CD14-positive monocyte (primary cell): ENCODE measurements at regions of chr6 and their contacts with region 1.

Region 1: GRCh38 chr6:11381801-11382513 is 149.5 kb upstream of the NEDD9 start:
- DNase-seq: peak; percentile 88 to 94 (median 92)
- H3K4me3 ChIP-seq: peak overlapping the region; percentile 46 to 99 (median 88)
- H3K4me3 Mint-ChIP-seq: peak overlapping the region; percentile 85 to 91
- H3K27ac ChIP-seq: peak overlapping the region; percentile 90 to 97
- H3K27ac Mint-ChIP-seq: peak overlapping the region; percentile 97 to 99 (median 97)
- H3K4me1 ChIP-seq: peaks cover 59 to 68% of the 10 kb centered on the region in 2 donors
- H3K4me1 Mint-ChIP-seq: peaks cover 62% of the 10 kb centered on the region
- H3K27me3 ChIP-seq: no peaks in the 10 kb centered on the region
- H3K27me3 Mint-ChIP-seq: peaks cover 1 to 3% (median 2%) of the 10 kb centered on the region in 3 donors
- CTCF ChIP-seq: no peak

Region 2: DNA sequence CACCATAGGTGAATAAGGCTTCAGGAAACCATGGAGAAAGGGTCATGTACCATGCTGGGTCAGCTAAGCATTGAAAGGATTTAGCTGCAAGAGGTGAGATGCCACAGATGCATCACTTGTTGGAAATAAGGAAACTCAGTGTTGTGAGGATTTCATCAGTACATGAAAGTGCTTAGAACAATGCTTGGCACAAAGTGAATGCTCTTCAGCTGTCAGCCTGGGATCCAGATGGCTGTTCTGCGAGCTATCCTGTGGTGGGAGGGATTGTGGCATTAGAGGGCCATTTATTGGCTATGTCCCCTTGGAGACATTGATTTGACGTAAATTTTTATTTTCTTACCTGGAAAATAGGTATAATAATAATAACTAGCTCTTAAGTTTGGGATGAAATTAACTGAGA is 390.8 kb before region 1 on chr6:
- intact Hi-C with region 1: no loop called
- DNase-seq: no peak
- H3K4me3 ChIP-seq: no peak overlapping the region
- H3K4me3 Mint-ChIP-seq: no peak overlapping the region
- H3K27ac ChIP-seq: no peak overlapping the region
- H3K27ac Mint-ChIP-seq: no peak overlapping the region
- H3K4me1 ChIP-seq: no peaks in the 10 kb centered on the region
- H3K4me1 Mint-ChIP-seq: no peaks in the 10 kb centered on the region
- H3K27me3 ChIP-seq: peaks cover 0 to 3% of the 10 kb centered on the region in 2 donors
- H3K27me3 Mint-ChIP-seq: peaks cover 2 to 7% (median 3%) of the 10 kb centered on the region in 3 donors
- CTCF ChIP-seq: no peak

Region 3: GRCh38 chr6:11343963-11344747 is 37.8 kb before region 1 on chr6:
- intact Hi-C with region 1: loop called in 1 of 2 experiments (anchors 5 kb)
- DNase-seq: no peak
- H3K4me3 ChIP-seq: no peak overlapping the region
- H3K4me3 Mint-ChIP-seq: no peak overlapping the region
- H3K27ac ChIP-seq: no peak overlapping the region
- H3K27ac Mint-ChIP-seq: peak overlapping the region in 3 of 7 donors; percentile 8 to 94 (median 10)
- H3K4me1 ChIP-seq: peaks cover 15 to 32% of the 10 kb centered on the region in 2 donors
- H3K4me1 Mint-ChIP-seq: peaks cover 60% of the 10 kb centered on the region
- H3K27me3 ChIP-seq: no peaks in the 10 kb centered on the region
- H3K27me3 Mint-ChIP-seq: peaks cover 0 to 1% (median 0%) of the 10 kb centered on the region in 3 donors
- CTCF ChIP-seq: no peak

Region 4: DNA sequence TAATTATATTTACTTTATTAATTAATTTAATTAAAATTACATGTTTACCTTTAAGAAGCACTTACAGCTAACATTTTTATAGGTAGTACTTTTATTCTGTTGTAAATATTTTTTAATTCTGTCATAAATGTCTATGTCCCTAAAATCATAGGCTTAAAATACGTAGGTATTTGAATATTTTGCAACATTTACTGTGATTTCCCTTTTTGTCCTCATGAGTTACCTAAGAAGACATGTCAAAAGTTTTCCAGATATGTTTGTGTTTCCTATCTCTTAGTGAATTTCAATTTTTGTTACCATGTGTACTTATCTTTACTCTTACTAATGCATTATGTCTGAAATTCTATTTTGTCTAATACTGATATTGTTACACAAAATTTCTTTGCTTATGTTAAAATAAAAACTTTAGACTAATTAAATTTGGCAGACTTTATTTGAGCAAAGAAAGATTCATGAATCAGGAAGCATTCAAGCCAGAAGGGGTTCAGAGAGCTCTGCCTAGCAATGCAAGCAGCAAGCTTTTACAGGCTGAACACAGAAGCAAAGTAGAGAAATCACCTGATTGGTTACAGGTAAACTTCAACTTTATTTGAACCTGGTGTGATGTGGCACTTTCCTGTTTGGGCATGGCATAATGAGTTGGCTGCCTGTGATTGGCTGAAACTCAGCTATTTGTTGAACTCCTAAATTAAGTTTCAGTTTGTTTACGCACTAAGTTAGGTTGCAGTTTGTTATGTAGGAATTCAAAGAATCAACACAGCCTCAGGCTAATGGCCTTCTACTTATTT is 32.4 kb after region 1 on chr6:
- intact Hi-C with region 1: no loop called
- DNase-seq: peak; percentile 23 to 71 (median 68)
- H3K4me3 ChIP-seq: no peak overlapping the region
- H3K4me3 Mint-ChIP-seq: no peak overlapping the region
- H3K27ac ChIP-seq: peak overlapping the region in 1 of 2 donors; percentile 55
- H3K27ac Mint-ChIP-seq: peak overlapping the region; percentile 66 to 86 (median 81)
- H3K4me1 ChIP-seq: peaks cover 14 to 21% of the 10 kb centered on the region in 2 donors
- H3K4me1 Mint-ChIP-seq: peaks cover 29% of the 10 kb centered on the region
- H3K27me3 ChIP-seq: no peaks in the 10 kb centered on the region
- H3K27me3 Mint-ChIP-seq: peaks cover 0 to 3% (median 2%) of the 10 kb centered on the region in 3 donors
- CTCF ChIP-seq: no peak

Region 5: DNA sequence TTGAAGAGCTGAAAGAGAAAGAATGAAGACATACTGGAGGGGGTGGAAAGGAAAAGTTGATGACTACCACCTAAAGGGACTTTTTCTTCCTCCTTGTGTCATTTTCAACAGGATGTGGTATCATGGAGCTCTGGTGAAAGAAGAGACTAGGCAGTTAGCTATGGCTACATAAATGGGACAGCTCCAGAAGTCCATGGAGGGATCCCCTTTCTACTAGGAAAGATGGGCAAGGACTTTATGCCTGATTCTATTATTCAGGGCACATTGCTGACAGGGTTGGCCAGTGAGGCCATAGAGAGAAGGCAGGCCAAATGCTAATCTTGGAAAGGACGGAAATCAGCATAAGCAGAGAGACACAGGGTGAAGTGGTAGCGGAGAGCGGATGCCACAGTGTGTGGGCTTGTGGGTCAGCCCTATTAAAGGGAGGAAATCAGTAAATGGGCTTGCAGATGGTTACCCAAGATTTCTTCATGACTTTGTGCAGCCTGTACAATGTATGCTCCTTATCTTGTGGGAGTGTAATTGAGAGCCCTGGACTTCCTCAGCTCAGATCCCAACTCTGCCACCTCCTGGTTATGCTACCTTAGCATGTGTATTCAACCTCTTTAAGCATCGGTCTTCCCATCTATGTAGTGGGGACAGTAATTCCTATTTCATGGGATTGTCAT is 78.2 kb after region 1 on chr6:
- intact Hi-C with region 1: loop called in 1 of 2 experiments (anchors 5 kb)
- DNase-seq: peak; percentile 52 to 87 (median 68)
- H3K4me3 ChIP-seq: peak overlapping the region in 1 of 3 experiments; percentile 38
- H3K4me3 Mint-ChIP-seq: peak overlapping the region; percentile 5 to 76
- H3K27ac ChIP-seq: peak overlapping the region; percentile 2 to 74
- H3K27ac Mint-ChIP-seq: peak overlapping the region; percentile 83 to 95 (median 90)
- H3K4me1 ChIP-seq: peaks cover 54 to 59% of the 10 kb centered on the region in 2 donors
- H3K4me1 Mint-ChIP-seq: peaks cover 62% of the 10 kb centered on the region
- H3K27me3 ChIP-seq: no peaks in the 10 kb centered on the region
- H3K27me3 Mint-ChIP-seq: no peaks in the 10 kb centered on the region
- CTCF ChIP-seq: no peak